OCI-LY7 (cell line): ENCODE measurements at regions of chr3 and their contacts with region 1.

Region 1: DNA sequence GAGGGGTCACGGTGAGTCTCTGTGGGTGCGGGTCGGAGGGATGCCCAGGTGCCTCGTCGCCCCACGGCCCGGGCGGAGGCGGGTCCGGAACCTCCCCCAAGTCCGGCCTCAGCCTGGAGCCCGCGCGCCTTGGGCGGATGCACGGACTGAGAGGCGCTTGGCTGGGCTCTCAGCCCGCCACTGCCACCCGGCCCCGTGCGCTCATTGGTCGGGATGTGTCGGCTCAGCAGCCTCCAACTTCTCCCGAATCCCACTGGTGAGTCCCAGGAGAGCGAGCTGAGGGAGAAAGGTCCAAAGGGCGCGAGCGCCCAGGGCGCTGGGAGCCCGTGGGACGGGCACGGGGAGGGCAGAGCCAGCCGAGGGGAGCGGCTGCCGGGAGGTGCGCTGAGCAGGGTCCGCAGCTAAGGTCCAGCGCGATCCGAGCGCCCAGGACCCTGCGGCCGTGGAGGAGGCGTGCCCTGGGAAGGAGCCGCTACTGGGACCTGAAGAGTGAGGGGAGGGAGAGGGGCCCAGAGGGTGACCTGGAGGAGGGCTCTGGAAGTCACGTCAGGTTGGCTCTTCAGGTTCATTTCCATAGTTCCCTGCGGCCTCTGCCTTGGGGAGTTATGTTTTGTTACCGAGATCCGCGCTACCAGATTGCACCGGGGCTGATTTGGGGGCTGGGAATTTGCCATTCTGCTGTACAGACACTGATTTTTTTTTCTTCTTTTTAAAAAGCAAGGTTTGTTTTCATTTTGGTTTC is at the start of gene MME:
- DNase-seq: peak; percentile 78
- H3K4me3 ChIP-seq: peak within 1 kb of the TSS; percentile 98
- H3K27ac ChIP-seq: peak within 1 kb of the TSS; percentile 77
- H3K4me1 ChIP-seq: peaks cover 33% of the 10 kb centered on the region
- CTCF ChIP-seq: no peak
- total RNA-seq, gene MME: 118 TPM in 2 replicates

Region 2: DNA sequence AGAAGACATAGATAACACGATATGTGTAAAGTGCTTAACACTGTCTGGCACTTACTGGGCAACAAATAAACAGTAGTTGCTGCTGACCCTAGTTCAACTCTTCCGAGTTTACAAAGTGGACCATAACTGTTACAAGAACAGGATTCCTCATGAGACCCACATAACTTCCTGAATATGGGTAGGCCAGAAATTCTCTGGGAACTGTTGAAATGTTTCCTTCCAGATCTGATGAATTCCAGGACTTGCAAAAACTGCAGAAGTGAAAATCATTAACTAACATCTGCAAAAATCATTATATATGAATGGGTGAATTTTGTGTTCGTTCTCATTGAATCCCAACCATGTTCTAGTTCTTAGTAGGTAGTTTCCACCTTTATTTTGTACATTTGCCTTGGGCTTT is 181.5 kb before region 1 on chr3:
- CTCF ChIA-PET with region 1: no interaction called
- POLR2A ChIA-PET with region 1: no interaction called
- intact Hi-C with region 1: no loop called
- DNase-seq: no peak
- H3K4me3 ChIP-seq: no peak overlapping the region
- H3K27ac ChIP-seq: no peak overlapping the region
- H3K4me1 ChIP-seq: no peaks in the 10 kb centered on the region
- CTCF ChIP-seq: no peak

Region 3: GRCh38 chr3:155093261-155093660 is 13.3 kb after region 1 on chr3:
- CTCF ChIA-PET with region 1: no interaction called
- POLR2A ChIA-PET with region 1: interaction called, 13 read pairs
- intact Hi-C with region 1: no loop called
- DNase-seq: peak; percentile 79
- H3K4me3 ChIP-seq: peak overlapping the region; percentile 2
- H3K27ac ChIP-seq: peak overlapping the region; percentile 76
- H3K4me1 ChIP-seq: peaks cover 68% of the 10 kb centered on the region
- CTCF ChIP-seq: no peak

Region 4: GRCh38 chr3:155110976-155111901 is 31.3 kb after region 1 on chr3:
- CTCF ChIA-PET with region 1: no interaction called
- POLR2A ChIA-PET with region 1: interaction called, 18 read pairs
- intact Hi-C with region 1: loop called (anchors 1 kb)
- DNase-seq: peak; percentile 88
- H3K4me3 ChIP-seq: peak overlapping the region; percentile 63
- H3K27ac ChIP-seq: peak overlapping the region; percentile 98
- H3K4me1 ChIP-seq: peaks cover 96% of the 10 kb centered on the region
- CTCF ChIP-seq: no peak

Region 5: GRCh38 chr3:155217591-155217990 is 137.7 kb after region 1 on chr3:
- CTCF ChIA-PET with region 1: no interaction called
- POLR2A ChIA-PET with region 1: no interaction called
- intact Hi-C with region 1: no loop called
- DNase-seq: no peak
- H3K4me3 ChIP-seq: no peak overlapping the region
- H3K27ac ChIP-seq: no peak overlapping the region
- H3K4me1 ChIP-seq: no peaks in the 10 kb centered on the region
- CTCF ChIP-seq: no peak

Region 6: GRCh38 chr3:155262280-155262679 is 182.4 kb after region 1 on chr3:
- CTCF ChIA-PET with region 1: no interaction called
- POLR2A ChIA-PET with region 1: no interaction called
- intact Hi-C with region 1: no loop called
- DNase-seq: no peak
- H3K4me3 ChIP-seq: no peak overlapping the region
- H3K27ac ChIP-seq: no peak overlapping the region
- H3K4me1 ChIP-seq: no peaks in the 10 kb centered on the region
- CTCF ChIP-seq: no peak

Region 7: GRCh38 chr3:155323063-155323666 is 243.2 kb after region 1 on chr3:
- CTCF ChIA-PET with region 1: no interaction called
- POLR2A ChIA-PET with region 1: interaction called, 3 read pairs
- intact Hi-C with region 1: loop called (anchors 5 kb)
- DNase-seq: peak; percentile 89
- H3K4me3 ChIP-seq: no peak overlapping the region
- H3K27ac ChIP-seq: no peak overlapping the region
- H3K4me1 ChIP-seq: peaks cover 3% of the 10 kb centered on the region
- CTCF ChIP-seq: peak; percentile 97

Region 8: DNA sequence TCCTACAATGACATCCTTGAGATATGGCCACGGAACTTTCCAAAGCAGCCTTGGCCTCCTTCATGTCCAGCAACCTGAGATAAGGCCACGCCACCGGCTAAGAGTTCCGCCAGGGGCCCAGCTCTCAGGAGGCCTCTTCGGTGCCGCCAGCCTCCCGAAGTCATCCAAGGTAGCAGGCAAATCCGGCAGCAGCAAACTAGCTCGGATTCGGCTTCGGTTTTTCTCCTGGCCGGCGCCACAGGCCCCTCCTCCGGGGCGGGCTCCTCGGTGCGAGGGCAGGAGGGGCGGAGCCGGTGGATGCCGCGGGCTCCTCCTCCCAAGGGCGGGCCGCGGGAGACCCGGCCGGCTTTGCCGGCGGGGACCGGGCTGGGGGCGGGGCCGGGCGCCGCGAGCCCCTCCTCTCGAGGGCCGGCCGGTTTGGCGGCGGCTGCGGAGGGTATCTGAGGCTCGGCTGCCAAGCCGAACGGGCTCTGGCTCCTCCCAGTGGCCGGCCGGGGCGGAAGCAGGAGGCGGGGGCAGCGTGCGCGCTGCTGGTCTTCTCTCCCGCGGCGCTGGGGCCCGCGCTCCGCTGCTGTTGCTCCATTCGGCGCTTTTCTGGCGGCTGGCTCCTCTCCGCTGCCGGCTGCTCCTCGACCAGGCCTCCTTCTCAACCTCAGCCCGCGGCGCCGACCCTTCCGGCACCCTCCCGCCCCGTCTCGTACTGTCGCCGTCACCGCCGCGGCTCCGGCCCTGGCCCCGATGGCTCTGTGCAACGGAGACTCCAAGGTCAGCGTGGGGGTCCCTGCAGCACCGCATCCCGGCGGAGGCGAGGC is 790.4 kb after region 1 on chr3 and contains the start of gene GMPS:
- CTCF ChIA-PET with region 1: no interaction called
- POLR2A ChIA-PET with region 1: interaction called, 3 read pairs
- intact Hi-C with region 1: loop called (anchors 5 kb)
- DNase-seq: peak; percentile 95
- H3K4me3 ChIP-seq: peak within 1 kb of the TSS; percentile 88
- H3K27ac ChIP-seq: peak within 1 kb of the TSS; percentile 81
- H3K4me1 ChIP-seq: peaks cover 23% of the 10 kb centered on the region
- CTCF ChIP-seq: peak; percentile 37; the same call in 1 of the 2 replicates
- total RNA-seq, gene GMPS: 32.3 and 37.6 TPM in 2 replicates